ENCODE measurements at regions of chr17 and their contacts with region 1.

Region 1: GRCh38 chr17:76597728-76598474 is 12.2 kb upstream of the ST6GALNAC2 start:
- DNase-seq: no peak
- ATAC-seq: no peak
- H3K4me3 ChIP-seq: no peak overlapping the region
- H3K27ac ChIP-seq: no peak overlapping the region
- H3K4me1 ChIP-seq: peaks cover 21 to 30% of the 10 kb centered on the region in 2 experiments
- H3K27me3 ChIP-seq: no peaks in the 10 kb centered on the region
- CTCF ChIP-seq: no peak
- EP300 ChIP-seq: no peak
- POLR2A ChIP-seq: no peak
- RAD21 ChIP-seq: no peak

Region 2: GRCh38 chr17:76567634-76568432 is 30.1 kb before region 1 on chr17:
- CTCF ChIA-PET with region 1: no interaction called
- POLR2A ChIA-PET with region 1: interaction called, 21 read pairs
- in situ Hi-C with region 1: no loop called
- intact Hi-C with region 1: no loop called
- DNase-seq: peak in 3 of 4 experiments; percentile 18 to 31 (median 30)
- ATAC-seq: peak; percentile 28
- H3K4me3 ChIP-seq: no peak overlapping the region
- H3K27ac ChIP-seq: peak overlapping the region; percentile 3; the same call in 1 of the 3 replicates
- H3K4me1 ChIP-seq: peaks cover 16 to 37% of the 10 kb centered on the region in 2 experiments; a peak in 4 of 5 replicates
- H3K27me3 ChIP-seq: no peaks in the 10 kb centered on the region
- CTCF ChIP-seq: no peak
- EP300 ChIP-seq: no peak
- POLR2A ChIP-seq: peak; percentile 45; the same call in 1 of the 2 replicates
- RAD21 ChIP-seq: no peak

Region 3: DNA sequence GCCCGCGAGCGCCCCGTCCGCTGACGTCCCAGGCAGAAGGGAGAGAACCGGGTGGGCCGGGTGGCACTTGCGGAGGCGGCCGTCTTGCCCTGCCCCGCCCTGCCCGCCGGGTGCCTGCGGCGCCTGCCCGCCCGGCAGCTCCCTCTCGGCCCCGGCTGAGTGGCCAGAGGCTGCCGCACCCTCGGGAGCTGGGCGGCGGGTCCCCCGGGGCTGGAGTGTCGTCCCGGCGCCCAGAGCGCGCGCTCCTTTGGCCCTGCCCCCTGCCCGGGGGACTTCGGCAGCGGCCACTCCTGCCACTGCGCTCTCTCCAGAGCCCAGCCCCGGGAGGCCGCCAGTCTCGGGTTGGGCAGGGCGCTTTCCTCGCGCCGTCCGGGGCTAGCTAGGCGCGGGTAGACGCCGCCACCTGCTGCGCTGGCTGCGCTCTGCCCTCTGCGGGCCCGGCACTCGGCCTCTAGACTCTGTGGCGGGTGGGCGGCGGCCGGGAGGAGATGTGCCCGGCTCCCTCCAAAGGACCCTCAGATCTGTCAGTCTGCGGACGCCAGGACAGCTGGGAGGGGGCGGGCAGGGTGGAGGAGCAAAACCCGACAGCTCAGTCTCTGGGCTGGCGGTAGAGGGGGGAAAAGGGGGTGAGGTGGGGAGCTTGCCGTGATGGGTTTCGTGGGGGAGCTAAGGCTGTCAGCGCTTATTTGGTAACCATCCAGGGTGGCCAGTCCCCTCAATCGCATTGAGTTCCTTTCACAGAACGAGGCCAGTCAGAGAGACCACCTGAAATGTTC is 11.9 kb before region 1 on chr17 and contains the start of gene ST6GALNAC2:
- CTCF ChIA-PET with region 1: no interaction called
- POLR2A ChIA-PET with region 1: interaction called, 17 read pairs
- in situ Hi-C with region 1: no loop called
- intact Hi-C with region 1: no loop called
- DNase-seq: peak in 2 of 4 experiments; percentile 34 to 44
- ATAC-seq: peak; percentile 58
- H3K4me3 ChIP-seq: peak within 1 kb of the TSS; percentile 13; the same call in 1 of the 2 replicates
- H3K27ac ChIP-seq: no peak within 1 kb of the TSS
- H3K4me1 ChIP-seq: peaks cover 0 to 28% of the 10 kb centered on the region in 2 experiments; a peak in 3 of 5 replicates
- H3K27me3 ChIP-seq: peaks cover 0 to 6% of the 10 kb centered on the region in 2 experiments; a peak in 2 of 5 replicates
- CTCF ChIP-seq: no peak
- EP300 ChIP-seq: no peak
- POLR2A ChIP-seq: no peak
- RAD21 ChIP-seq: no peak
- polyA plus RNA-seq, gene ST6GALNAC2: not detected

Region 4: GRCh38 chr17:76612977-76613851 is 15.3 kb after region 1 on chr17:
- CTCF ChIA-PET with region 1: no interaction called
- POLR2A ChIA-PET with region 1: interaction called, 10 read pairs
- in situ Hi-C with region 1: no loop called
- intact Hi-C with region 1: no loop called
- DNase-seq: peak; percentile 51 to 67 (median 61)
- ATAC-seq: peak; percentile 87
- H3K4me3 ChIP-seq: no peak overlapping the region
- H3K27ac ChIP-seq: no peak overlapping the region
- H3K4me1 ChIP-seq: peaks cover 3 to 11% of the 10 kb centered on the region in 2 experiments; a peak in 4 of 5 replicates
- H3K27me3 ChIP-seq: no peaks in the 10 kb centered on the region
- CTCF ChIP-seq: peak; percentile 28 to 92 (median 78); a peak in 5 of 6 replicates
- EP300 ChIP-seq: no peak
- POLR2A ChIP-seq: no peak
- RAD21 ChIP-seq: peak in 1 of 2 experiments; percentile 55; a peak in 2 of 4 replicates

Measured in K562 (cell line).